A549 (cell line): ENCODE measurements at regions of chr17 and their contacts with region 1.

Region 1: DNA sequence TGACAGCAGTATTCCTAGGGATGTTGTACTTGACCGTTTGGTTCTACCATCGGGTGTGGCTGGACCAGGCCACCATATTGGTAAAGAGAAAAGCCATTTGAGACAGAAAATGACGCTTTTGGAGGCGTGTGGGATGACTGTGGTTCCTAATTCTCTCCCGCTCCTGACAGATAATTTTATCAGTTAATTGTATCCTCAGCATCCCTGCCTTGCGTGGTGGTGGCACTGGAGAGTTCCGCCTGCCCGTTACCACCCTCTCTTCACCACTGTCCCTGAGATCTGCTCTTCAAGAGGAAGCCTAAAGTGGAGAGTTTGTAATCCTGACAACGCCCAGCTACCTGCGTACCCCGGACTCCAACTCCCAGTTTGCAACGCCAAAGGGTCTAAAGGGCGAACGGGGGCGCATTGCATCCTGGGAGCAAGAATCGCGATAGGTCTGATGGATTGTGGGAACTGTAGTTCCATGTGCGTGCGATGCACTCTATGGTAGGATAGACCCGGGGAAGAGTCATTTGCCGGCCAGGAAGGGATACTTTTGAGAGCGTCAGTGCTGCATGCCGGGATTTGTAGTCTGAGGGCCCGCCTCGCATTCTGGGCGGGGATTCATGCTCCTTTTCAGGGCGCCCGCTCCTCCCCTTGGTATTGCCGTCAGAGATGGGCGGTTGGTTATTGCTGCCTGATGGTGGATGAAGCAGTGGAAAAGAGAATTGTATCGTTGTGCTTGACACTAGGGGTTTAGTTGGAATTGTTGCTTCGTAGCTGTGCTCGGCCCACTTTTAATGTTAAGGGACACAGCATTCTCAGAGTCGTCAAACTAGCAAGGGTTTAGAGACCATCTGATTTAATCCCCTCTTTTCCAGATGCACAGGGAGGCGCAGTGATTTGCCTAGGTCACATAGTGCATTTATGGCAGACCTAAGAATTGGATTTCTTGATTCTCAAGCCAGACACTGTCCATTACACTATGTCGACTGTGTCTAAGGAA is 965 bp upstream of the PHF12 start:
- DNase-seq: peak; percentile 100
- ATAC-seq: peak; percentile 75 to 91
- H3K4me3 ChIP-seq: peak overlapping the region; percentile 56
- H3K27ac ChIP-seq: peak overlapping the region; percentile 89 to 91
- H3K4me1 ChIP-seq: peaks cover 21% of the 10 kb centered on the region
- CTCF ChIP-seq: no peak
- EP300 ChIP-seq: no peak
- POLR2A ChIP-seq: peak; percentile 16
- RAD21 ChIP-seq: no peak

Region 2: DNA sequence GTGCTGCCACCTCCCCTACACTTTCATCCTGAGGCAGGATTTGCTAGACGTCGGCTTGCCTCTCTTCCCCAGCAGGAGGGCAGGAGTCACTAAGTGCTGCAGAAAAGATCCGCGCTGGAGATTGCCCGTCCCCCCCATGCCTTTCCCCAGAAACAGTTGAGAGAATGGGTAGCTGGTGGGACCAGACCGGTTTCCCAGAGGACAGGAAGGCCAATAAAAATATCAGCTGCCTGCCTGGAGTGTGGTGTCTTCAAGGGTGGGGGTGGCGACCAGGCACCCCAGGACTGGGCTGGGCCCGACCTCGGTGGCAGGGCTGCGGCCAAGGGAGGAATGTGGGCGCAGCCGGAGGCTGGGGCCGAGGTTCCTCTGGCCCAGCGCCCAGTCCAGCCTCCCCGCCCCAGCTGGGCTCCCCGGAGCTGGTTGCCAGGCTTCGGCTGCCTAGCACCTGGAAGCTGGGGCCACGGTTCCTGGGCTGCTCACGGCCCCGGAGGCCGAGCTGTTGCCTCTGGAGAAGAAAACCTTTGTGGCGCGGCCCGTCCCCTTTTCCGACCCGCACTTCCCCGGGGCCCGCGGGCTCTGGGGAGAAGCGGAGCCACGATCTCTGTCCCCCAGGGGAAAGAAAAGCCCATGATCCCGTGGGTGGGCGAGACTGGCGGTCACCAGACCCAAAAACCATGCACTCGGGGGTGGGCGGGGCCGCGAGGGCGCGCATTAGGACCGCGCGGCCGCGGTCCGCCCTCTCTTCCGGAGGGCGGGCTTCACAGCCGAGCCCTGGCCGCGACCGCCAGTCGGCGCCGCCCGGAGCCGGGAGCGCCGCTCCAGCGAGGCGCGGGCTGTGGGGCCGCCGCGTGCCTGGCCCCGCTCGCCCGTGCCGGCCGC is 208.8 kb before region 1 on chr17 and contains the start of gene TRAF4:
- CTCF ChIA-PET with region 1: interaction called, 4 read pairs
- POLR2A ChIA-PET with region 1: interaction called, 10 read pairs
- DNase-seq: peak; percentile 93 to 96
- ATAC-seq: peak; percentile 66 to 75
- H3K4me3 ChIP-seq: peak within 1 kb of the TSS; percentile 93
- H3K27ac ChIP-seq: peak within 1 kb of the TSS; percentile 98 to 99
- H3K4me1 ChIP-seq: peaks cover 44% of the 10 kb centered on the region
- CTCF ChIP-seq: peak; percentile 41; the same call in 2 of the 3 replicates
- EP300 ChIP-seq: peak in 1 of 2 experiments; percentile 32; a peak in 1 of 5 replicates
- POLR2A ChIP-seq: peak; percentile 97
- RAD21 ChIP-seq: 0 out of 5 replicates have a peak, but pooled peaks of 1 of the 2 experiments have one; percentile 1
- polyA plus RNA-seq, gene TRAF4: 64.0 and 70.2 TPM in 2 replicates

Region 3: DNA sequence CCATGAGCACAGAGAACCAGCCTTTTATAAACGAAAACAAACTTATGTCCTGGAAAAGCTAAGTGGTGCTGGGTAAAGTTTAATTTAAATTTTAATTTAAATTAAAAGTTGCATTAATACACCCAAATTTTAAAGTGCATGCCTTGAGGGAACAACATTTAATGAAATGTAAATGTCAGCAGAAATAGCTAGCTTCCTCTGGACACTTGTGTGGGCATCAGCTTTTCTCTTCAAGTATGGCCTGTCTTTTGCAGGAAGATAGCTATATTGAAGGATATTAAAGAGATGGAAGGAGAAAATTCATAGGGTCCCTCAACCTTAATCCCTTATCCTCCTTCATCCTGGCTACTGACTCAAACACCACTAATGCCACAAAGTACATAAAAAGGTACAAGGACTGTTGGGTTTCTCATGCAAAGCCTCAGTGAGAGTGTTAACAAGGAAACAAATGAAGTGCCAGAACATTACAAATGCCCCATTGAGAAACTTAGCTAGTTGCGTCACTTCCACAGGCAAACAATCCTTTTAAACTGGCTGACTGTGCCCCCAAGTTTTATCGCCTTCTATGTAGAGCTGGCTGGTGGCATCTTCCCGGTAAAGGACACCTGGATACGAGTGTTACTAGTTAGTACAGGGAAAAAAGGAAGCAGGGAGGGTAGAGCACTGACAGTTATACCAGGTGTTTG is 15.1 kb before region 1 on chr17:
- CTCF ChIA-PET with region 1: interaction called, 16 read pairs
- POLR2A ChIA-PET with region 1: interaction called, 5 read pairs
- DNase-seq: no peak
- ATAC-seq: no peak
- H3K4me3 ChIP-seq: no peak overlapping the region
- H3K27ac ChIP-seq: no peak overlapping the region
- H3K4me1 ChIP-seq: peaks cover 18% of the 10 kb centered on the region
- CTCF ChIP-seq: no peak
- EP300 ChIP-seq: no peak
- POLR2A ChIP-seq: no peak
- RAD21 ChIP-seq: no peak

Region 4: DNA sequence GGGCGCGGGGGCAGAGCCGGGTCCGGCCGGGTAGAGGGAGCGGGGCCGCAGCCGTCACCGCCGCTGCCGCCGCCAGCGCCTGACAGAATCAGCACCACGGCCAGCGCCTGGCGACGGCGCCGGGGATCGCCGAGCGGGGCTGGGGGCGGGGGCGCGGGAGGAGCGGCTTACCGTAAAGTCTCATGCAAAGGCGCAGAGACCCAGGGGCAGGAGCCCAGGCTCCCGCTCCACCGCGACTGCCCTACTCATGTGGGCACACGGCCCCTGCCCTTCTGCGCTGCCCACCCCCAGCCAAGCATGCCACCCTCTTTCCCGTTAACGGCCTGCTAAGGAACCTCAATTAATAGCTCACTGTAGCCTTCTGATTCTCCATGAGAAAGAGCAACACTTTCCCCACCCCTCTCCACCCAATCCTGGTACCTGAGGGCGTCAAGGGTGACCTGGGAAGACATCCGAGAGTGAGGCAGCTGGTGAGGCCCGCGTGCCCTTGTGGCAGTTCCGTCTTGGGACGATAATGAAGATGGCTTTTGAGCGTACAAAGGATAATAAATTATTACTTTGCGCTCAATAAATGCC is 53.7 kb after region 1 on chr17 and contains the start of gene SEZ6:
- CTCF ChIA-PET with region 1: interaction called, 10 read pairs
- POLR2A ChIA-PET with region 1: no interaction called
- DNase-seq: peak; percentile 65 to 79
- ATAC-seq: peak; percentile 54 to 76
- H3K4me3 ChIP-seq: peak within 1 kb of the TSS; percentile 38
- H3K27ac ChIP-seq: no peak within 1 kb of the TSS
- H3K4me1 ChIP-seq: peaks cover 31% of the 10 kb centered on the region
- CTCF ChIP-seq: no peak
- EP300 ChIP-seq: no peak; a peak in 1 of 5 replicates
- POLR2A ChIP-seq: no peak
- RAD21 ChIP-seq: no peak
- polyA plus RNA-seq, gene SEZ6: not detected in 2 replicates

Region 5: GRCh38 chr17:29111816-29112499 is 159.7 kb after region 1 on chr17:
- CTCF ChIA-PET with region 1: interaction called, 1,025 read pairs
- POLR2A ChIA-PET with region 1: interaction called, 5 read pairs
- DNase-seq: peak; percentile 65 to 73
- ATAC-seq: peak; percentile 70 to 83
- H3K4me3 ChIP-seq: no peak overlapping the region
- H3K27ac ChIP-seq: no peak overlapping the region
- H3K4me1 ChIP-seq: peaks cover 17% of the 10 kb centered on the region
- CTCF ChIP-seq: peak; percentile 89
- EP300 ChIP-seq: no peak
- POLR2A ChIP-seq: no peak
- RAD21 ChIP-seq: peak; percentile 78 to 83